ENCODE measurements at regions of chr1 and their contacts with region 1.

Region 1: DNA sequence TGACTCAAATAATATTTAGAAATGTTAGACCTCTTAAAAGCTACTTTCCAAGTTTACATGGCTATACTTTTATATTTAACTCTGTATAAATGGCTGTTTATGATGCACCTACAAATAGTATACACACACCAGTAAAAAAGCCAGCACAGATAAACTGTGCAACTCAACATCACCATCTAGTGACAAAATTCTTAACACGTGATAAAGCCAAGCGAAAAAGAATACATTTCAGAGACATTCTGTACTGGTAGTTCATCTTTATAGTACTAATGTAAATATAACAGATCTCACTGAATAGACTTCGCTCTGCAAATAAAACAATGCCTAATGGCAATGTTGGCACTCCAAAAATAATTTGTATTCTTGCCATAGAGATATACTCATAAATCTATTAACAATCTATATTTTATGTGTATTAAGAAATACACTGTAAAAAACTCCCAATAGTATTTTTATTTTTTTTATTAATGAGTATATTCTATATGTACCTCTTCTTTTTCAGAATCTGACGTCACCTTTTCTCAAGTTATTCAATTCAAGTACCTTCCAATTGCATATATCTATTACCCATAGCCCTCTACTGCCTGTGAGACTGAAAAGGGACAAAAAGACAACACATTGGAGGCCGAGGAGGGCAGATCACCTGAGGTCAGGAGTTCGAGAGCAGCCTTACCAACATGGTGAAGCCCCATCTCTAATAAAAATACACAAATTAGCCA is 100.2 kb downstream of the DPYD start:
- DNase-seq: peak; percentile 71
- H3K4me3 ChIP-seq: no peak overlapping the region
- H3K27ac ChIP-seq: no peak overlapping the region
- H3K4me1 ChIP-seq: no peaks in the 10 kb centered on the region
- H3K27me3 ChIP-seq: no peaks in the 10 kb centered on the region
- CTCF ChIP-seq: peak; percentile 69

Region 2: DNA sequence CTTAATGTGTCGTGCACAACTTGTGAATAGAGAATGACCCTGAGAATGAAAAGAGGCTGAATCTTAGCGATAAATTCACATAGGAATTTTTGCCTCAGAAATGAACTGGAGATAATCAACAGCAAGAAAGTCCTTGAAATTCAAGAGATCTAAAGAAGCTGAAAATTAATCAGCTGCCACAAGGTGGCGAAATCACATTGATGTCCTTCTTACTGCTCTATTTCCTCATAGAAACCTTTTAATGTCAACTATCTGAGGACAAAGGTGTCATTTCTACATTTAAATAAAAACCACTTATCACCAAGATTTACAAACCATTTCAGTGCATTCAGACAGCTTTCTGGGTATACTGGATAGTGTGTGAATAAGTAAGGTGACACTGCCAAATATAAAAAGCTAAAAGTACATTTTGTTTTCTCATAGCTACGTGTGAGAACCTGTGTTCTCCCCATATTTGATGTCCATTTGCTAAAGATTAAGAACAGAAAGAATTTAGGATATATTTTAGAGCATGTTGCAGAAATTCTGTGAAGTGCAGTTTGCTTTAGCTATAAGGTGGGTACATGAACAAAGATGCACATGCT is 1584.4 kb before region 1 on chr1:
- CTCF ChIA-PET with region 1: no interaction called
- POLR2A ChIA-PET with region 1: no interaction called
- intact Hi-C with region 1: loop called (anchors 10 kb)
- DNase-seq: peak; percentile 69
- H3K4me3 ChIP-seq: no peak overlapping the region
- H3K27ac ChIP-seq: no peak overlapping the region
- H3K4me1 ChIP-seq: peaks cover 8% of the 10 kb centered on the region
- H3K27me3 ChIP-seq: no peaks in the 10 kb centered on the region
- CTCF ChIP-seq: peak; percentile 72

Region 3: GRCh38 chr1:96966536-96967138 is 854.0 kb before region 1 on chr1:
- CTCF ChIA-PET with region 1: no interaction called
- POLR2A ChIA-PET with region 1: no interaction called
- intact Hi-C with region 1: loop called (anchors 5 kb)
- DNase-seq: peak; percentile 86
- H3K4me3 ChIP-seq: no peak overlapping the region
- H3K27ac ChIP-seq: peak overlapping the region; percentile 58
- H3K4me1 ChIP-seq: peaks cover 20% of the 10 kb centered on the region
- H3K27me3 ChIP-seq: no peaks in the 10 kb centered on the region
- CTCF ChIP-seq: peak; percentile 95

Region 4: GRCh38 chr1:97192872-97193572 is 627.6 kb before region 1 on chr1:
- CTCF ChIA-PET with region 1: no interaction called
- POLR2A ChIA-PET with region 1: no interaction called
- intact Hi-C with region 1: loop called (anchors 10 kb)
- DNase-seq: no peak
- H3K4me3 ChIP-seq: no peak overlapping the region
- H3K27ac ChIP-seq: no peak overlapping the region
- H3K4me1 ChIP-seq: peaks cover 36% of the 10 kb centered on the region
- H3K27me3 ChIP-seq: no peaks in the 10 kb centered on the region
- CTCF ChIP-seq: no peak

Region 5: DNA sequence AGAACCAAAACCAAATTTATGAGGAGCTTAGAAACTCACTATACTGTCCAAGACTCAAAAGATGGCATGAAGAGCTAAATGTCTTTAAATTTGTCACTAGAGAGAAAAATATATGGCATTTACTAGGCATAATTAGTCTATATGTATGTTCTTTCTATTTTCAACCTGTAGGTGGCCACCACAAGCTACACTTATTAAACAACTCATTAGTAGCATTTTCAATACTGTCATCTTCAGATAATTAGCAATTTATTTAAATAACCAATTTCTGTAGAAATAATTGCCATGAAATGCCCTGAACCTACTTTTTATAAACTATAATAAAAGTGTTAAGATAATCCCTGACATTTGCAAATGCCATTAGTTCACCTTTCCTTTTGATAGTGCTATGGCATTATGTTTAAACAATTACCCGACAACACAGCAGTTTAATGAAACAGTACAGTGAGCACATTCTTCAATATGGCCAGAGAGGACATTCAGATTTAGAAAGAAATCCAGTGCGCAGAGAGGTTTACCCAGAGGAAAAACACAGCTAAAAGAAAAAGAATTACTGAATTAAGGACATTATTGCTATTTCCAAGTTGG is 576.6 kb before region 1 on chr1:
- CTCF ChIA-PET with region 1: no interaction called
- POLR2A ChIA-PET with region 1: no interaction called
- intact Hi-C with region 1: loop called (anchors 5 kb)
- DNase-seq: peak; percentile 42
- H3K4me3 ChIP-seq: no peak overlapping the region
- H3K27ac ChIP-seq: no peak overlapping the region
- H3K4me1 ChIP-seq: no peaks in the 10 kb centered on the region
- H3K27me3 ChIP-seq: no peaks in the 10 kb centered on the region
- CTCF ChIP-seq: peak; percentile 70

Region 6: DNA sequence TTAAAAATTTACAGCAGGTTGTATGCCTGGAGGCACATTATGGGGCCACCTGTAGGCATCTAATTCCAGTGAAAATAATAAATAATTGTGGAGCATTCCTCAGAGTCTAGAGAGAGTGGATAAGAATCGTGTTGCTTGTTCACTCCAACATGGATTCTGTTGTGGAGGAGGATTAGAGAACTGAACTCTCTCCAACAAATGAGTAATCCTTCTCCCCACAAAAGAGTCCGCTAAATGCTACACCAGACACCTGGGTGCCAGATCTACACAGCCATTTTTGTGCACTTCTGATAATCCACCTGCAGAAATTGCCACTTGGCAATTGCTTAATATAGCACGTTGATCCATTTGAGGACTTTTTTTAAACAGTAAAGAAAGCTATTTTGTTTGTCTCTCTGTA is 213.9 kb after region 1 on chr1:
- CTCF ChIA-PET with region 1: no interaction called
- POLR2A ChIA-PET with region 1: no interaction called
- intact Hi-C with region 1: no loop called
- DNase-seq: no peak
- H3K4me3 ChIP-seq: no peak overlapping the region
- H3K27ac ChIP-seq: no peak overlapping the region
- H3K4me1 ChIP-seq: no peaks in the 10 kb centered on the region
- H3K27me3 ChIP-seq: no peaks in the 10 kb centered on the region
- CTCF ChIP-seq: no peak

Region 7: GRCh38 chr1:98478121-98478520 is 657.5 kb after region 1 on chr1:
- CTCF ChIA-PET with region 1: no interaction called
- POLR2A ChIA-PET with region 1: no interaction called
- intact Hi-C with region 1: loop called (anchors 10 kb)
- DNase-seq: no peak
- H3K4me3 ChIP-seq: no peak overlapping the region
- H3K27ac ChIP-seq: no peak overlapping the region
- H3K4me1 ChIP-seq: peaks cover 22% of the 10 kb centered on the region
- H3K27me3 ChIP-seq: no peaks in the 10 kb centered on the region
- CTCF ChIP-seq: no peak